ENCODE measurements at regions of chr6 and their contacts with region 1.

Region 1: DNA sequence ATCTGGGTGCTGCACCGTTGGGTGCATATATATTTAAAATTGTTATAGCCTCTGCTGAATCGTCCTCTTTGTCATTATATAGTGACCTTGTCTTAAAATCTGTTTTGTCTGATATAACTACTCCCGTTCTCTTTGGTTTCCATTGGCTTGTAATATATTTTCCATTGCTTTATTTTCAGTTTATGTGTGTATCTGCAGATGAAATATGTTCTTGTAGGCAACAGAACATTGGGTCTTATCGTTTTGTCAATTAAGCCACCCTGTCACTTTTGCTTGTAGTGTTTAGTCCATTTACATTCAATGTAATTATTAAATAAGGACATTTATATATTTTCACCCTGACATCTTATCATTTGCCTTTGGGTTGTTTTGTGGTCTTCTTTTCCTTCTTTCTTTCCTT is 933.9 kb downstream of the EPHA7 start:
- DNase-seq: no peak
- H3K4me3 ChIP-seq: no peak overlapping the region
- H3K27ac ChIP-seq: no peak overlapping the region
- H3K4me1 ChIP-seq: no peaks in the 10 kb centered on the region
- H3K27me3 ChIP-seq: no peaks in the 10 kb centered on the region
- CTCF ChIP-seq: no peak
- EP300 ChIP-seq: no peak
- POLR2A ChIP-seq: no peak

Region 2: GRCh38 chr6:92086750-92087149 is 398.7 kb before region 1 on chr6:
- in situ Hi-C with region 1: no loop called
- intact Hi-C with region 1: no loop called
- DNase-seq: no peak
- H3K4me3 ChIP-seq: no peak overlapping the region
- H3K27ac ChIP-seq: no peak overlapping the region
- H3K4me1 ChIP-seq: no peaks in the 10 kb centered on the region
- H3K27me3 ChIP-seq: no peaks in the 10 kb centered on the region
- CTCF ChIP-seq: no peak
- EP300 ChIP-seq: no peak
- POLR2A ChIP-seq: no peak

Region 3: DNA sequence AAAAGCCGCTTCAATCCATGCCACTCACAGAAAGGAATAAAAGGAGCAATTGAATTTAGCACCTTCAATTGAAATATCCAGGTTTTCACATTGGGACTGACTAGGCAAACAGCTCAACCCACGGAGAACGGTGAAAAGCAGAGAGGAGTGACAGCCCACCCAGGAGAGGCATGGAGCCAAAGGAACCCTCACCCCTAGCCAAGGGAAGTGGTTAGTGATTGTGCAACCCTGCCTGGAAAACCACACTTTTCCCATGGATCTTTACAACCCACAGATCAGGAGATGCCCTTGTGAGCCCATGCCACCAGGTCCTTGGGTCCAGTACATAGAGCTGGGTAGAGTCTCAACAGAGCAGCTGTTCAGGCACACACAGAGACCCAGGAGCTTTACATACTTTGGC is 22.1 kb after region 1 on chr6:
- in situ Hi-C with region 1: no loop called
- intact Hi-C with region 1: loop called (anchors 1 kb)
- DNase-seq: no peak
- H3K4me3 ChIP-seq: no peak overlapping the region
- H3K27ac ChIP-seq: no peak overlapping the region
- H3K4me1 ChIP-seq: no peaks in the 10 kb centered on the region
- H3K27me3 ChIP-seq: no peaks in the 10 kb centered on the region
- CTCF ChIP-seq: no peak
- EP300 ChIP-seq: no peak
- POLR2A ChIP-seq: no peak

Measured in transverse colon (tissue), 4 donors.